Psoas muscle (tissue), 8 donors: ENCODE measurements at regions of chr2 and their contacts with region 1.

Region 1: GRCh38 chr2:9519250-9519649 is 36.4 kb downstream of the ADAM17 start:
- DNase-seq: no peak
- ATAC-seq: peak; percentile 42 to 77 (median 64)
- H3K4me3 ChIP-seq: no peak overlapping the region
- H3K27ac ChIP-seq: peak overlapping the region; percentile 27
- H3K4me1 ChIP-seq: no peaks in the 10 kb centered on the region
- H3K27me3 ChIP-seq: no peaks in the 10 kb centered on the region
- CTCF ChIP-seq: no peak

Region 2: DNA sequence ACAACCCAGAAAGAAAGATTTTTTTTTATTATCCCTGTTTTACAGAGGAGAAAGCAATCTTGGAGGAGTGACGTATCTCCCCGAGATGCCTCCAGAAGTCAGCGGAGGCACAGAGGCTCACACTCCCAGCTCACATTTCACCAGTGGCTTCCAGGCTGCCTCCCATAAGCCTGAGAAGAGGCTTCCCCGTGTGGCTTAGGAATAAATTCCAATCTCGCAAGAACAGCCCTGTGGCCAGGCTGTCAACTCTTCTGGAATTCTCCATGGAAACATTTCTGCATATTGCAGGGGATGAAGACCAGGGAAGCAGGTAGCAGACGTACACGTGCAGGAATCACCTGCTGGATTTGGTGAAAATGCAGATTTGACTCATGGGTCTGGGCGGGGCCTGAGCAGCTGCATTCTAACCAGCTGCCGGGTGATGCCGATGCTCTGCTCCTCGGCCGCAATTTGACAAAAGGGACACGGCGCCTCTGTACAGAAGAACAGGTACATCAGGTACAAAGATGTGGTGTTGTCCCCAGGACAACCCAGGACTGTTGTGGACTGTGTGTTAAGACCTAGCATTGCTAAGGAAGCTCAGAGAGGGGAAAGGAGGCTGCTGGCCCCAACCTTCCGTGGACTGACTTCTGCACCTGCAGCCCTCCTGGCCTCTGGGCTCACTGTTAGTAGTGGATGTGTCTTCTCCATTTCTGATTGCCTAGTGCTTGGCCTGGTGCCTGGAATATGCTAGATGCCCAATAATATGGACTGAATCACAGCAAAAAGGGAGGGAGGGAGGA is 951.6 kb before region 1 on chr2:
- intact Hi-C with region 1: no loop called
- DNase-seq: no peak
- ATAC-seq: peak in 1 of 4 donors; percentile 60
- H3K4me3 ChIP-seq: no peak overlapping the region
- H3K27ac ChIP-seq: no peak overlapping the region
- H3K4me1 ChIP-seq: no peaks in the 10 kb centered on the region
- H3K27me3 ChIP-seq: peaks cover 0 to 4% (median 0%) of the 10 kb centered on the region in 3 donors
- CTCF ChIP-seq: no peak

Region 3: DNA sequence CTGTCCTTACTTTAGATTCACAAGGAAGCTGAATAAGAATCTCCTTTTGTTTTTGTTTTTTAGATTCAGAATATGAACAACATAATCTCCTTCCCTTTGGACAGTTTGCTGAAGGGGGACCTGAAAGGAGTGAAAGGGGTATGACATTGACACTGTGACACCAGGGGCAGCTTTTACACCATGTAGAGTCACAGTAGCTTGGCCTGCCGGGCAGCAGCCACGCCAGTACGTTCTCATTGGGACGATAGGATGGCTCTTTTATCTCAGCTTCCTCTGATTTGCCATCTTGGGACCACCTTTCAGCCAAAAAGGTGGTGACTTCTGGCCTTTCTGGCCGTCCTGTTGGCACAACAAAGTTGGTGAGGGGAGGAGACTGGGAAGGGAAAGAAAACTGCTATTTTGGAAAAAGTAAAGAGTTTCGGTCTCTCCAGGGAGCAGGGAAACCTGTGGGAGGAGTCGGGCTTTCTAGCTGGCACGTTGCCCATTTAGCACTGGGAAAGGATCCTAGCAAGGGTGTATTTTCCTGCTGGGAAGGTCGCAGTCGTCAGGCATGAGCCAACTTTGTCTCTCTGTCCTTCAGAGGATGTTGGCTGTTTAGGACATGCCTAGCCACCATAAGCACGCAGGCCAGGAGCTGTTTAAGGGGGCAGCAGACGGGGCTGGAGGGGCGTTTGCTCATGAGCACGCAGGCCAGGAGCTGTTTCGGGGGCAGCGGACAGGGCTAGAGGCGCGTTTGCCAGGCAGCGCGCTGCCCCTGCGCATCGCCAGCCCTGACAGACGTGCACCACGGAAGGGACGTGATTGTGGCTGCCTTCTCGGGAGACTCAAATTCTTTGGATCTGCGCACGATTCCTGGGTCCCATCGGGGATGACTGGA is 200.6 kb before region 1 on chr2:
- intact Hi-C with region 1: no loop called
- DNase-seq: peak; percentile 52 to 67
- ATAC-seq: peak in 2 of 4 donors; percentile 13 to 36
- H3K4me3 ChIP-seq: no peak overlapping the region
- H3K27ac ChIP-seq: no peak overlapping the region
- H3K4me1 ChIP-seq: no peaks in the 10 kb centered on the region
- H3K27me3 ChIP-seq: no peaks in the 10 kb centered on the region
- CTCF ChIP-seq: no peak

Region 4: DNA sequence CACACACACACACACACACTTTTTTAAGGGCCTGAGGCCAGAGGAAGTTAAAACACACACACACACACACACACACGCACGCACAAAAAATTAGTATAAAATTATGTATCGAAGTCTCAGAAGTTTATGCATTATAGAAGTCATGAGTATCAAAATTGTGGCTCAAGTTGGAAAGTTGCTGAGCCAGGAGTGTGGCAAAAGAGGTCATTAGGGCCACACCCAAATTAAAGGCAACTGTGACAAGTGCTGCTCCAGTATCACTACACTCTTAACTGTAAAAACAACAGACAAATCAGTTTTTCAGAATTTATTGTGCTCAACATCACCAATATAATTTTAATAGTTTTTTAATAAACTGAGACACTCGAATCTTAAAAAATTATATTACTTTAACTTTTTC is 74.7 kb after region 1 on chr2:
- intact Hi-C with region 1: loop called in 1 of 2 experiments (anchors 2 kb)
- DNase-seq: no peak
- ATAC-seq: peak in 2 of 4 donors; percentile 41 to 59
- H3K4me3 ChIP-seq: no peak overlapping the region
- H3K27ac ChIP-seq: peak overlapping the region; percentile 71
- H3K4me1 ChIP-seq: peaks cover 32% of the 10 kb centered on the region
- H3K27me3 ChIP-seq: no peaks in the 10 kb centered on the region
- CTCF ChIP-seq: no peak